AG04450 (cell line): ENCODE measurements at regions of chr16 and their contacts with region 1.

Region 1: DNA sequence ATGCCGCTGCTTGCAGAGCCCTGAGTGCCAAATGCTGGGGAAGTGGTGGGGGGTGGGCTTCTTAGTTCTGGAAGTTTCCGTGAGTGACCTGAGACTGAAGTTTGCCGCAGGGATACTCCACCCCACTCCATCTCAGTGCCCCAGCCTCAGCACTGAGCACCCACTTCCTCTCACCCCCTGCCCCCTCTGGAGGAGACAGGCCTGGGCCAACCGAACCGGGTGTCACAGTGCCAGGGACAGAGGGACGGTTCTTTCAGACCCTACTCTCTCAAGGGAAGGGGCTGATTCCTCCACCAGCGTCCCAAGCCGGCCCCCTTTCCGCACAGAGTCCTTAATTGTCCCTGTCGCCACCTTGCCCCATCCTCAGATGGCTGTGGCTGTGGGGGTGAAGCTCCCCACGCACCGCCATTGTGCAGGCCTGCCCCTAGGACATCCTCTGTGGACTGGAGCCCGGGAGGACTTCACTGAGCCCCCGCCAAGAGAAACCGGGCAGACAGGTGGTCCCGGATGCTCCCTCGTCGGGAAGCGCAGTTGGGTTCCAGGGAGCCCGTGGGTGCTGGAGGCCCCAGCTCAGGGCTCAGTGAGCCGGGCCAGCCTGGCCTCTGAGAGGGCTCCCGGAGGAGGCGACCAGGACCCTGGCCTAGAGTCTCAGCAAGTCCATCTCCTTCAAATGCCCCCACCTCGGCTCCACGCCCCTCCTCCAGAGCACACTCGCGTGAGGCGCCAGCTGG is 1.6 kb upstream of the KREMEN2 start:
- DNase-seq: no peak
- H3K4me3 ChIP-seq: no peak overlapping the region
- H3K27ac ChIP-seq: no peak overlapping the region
- H3K27me3 ChIP-seq: peaks cover 37% of the 10 kb centered on the region
- CTCF ChIP-seq: no peak

Region 2: GRCh38 chr16:2936436-2937011 is 26.0 kb before region 1 on chr16:
- CTCF ChIA-PET with region 1: interaction called, 4 read pairs
- POLR2A ChIA-PET with region 1: interaction called, 11 read pairs
- DNase-seq: no peak
- H3K4me3 ChIP-seq: no peak overlapping the region
- H3K27ac ChIP-seq: no peak overlapping the region
- H3K27me3 ChIP-seq: no peaks in the 10 kb centered on the region
- CTCF ChIP-seq: no peak